ENCODE measurements at regions of chr6 and their contacts with region 1.

Region 1: GRCh38 chr6:103335412-103335811 is 1524.3 kb downstream of the HACE1 start:
- DNase-seq: no peak
- H3K4me3 ChIP-seq: no peak overlapping the region
- H3K27ac ChIP-seq: no peak overlapping the region
- H3K4me1 ChIP-seq: no peaks in the 10 kb centered on the region
- H3K27me3 ChIP-seq: no peaks in the 10 kb centered on the region
- CTCF ChIP-seq: no peak
- EP300 ChIP-seq: no peak
- POLR2A ChIP-seq: no peak

Region 2: DNA sequence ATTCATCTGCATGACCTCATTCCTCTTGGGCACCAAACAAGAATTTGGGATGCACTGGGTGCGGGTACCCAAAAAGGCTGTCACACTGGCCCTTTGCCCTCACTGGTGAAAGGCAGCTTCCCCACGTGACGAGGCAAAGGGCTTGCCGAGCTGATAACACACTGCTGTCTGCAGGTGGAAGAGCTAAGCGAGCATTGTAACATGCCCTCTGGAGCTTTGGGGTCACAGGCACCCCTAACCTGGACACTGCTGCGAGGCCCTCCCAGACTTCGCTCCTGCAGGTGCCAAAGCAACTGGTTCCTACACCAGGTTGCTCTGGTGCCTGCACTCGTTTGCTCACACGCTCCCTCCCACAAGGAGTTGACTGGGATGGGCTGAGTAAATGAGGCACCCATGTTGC is 71.4 kb before region 1 on chr6:
- in situ Hi-C with region 1: loop called in 1 of 4 experiments (anchors 10 kb)
- intact Hi-C with region 1: no loop called
- DNase-seq: no peak
- H3K4me3 ChIP-seq: no peak overlapping the region
- H3K27ac ChIP-seq: no peak overlapping the region
- H3K4me1 ChIP-seq: no peaks in the 10 kb centered on the region
- H3K27me3 ChIP-seq: no peaks in the 10 kb centered on the region
- CTCF ChIP-seq: no peak
- EP300 ChIP-seq: no peak
- POLR2A ChIP-seq: no peak

Region 3: DNA sequence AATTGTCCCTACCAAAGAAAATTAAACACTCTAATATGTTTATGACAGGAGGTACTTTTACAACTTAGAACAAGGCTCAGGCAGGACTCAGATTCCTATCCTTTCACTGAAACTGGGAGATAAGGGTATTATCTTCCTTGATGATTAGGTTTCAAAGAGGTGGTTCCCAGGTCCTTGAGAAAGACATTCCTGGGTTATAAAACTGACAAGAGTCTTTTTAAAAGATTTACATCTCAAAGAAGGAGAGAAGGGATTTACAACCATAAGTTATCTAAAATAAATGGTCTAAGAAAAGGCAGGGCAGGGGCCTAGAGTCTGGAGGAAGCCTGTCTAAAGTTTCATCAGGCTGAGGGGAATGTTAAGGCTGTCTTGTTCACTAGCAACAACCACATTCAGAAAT is 31.8 kb after region 1 on chr6:
- in situ Hi-C with region 1: no loop called
- intact Hi-C with region 1: no loop called
- DNase-seq: no peak
- H3K4me3 ChIP-seq: no peak overlapping the region
- H3K27ac ChIP-seq: no peak overlapping the region
- H3K4me1 ChIP-seq: no peaks in the 10 kb centered on the region
- H3K27me3 ChIP-seq: no peaks in the 10 kb centered on the region
- CTCF ChIP-seq: no peak
- EP300 ChIP-seq: no peak
- POLR2A ChIP-seq: no peak

Region 4: GRCh38 chr6:103723438-103724322 is 388.3 kb after region 1 on chr6:
- in situ Hi-C with region 1: no loop called
- intact Hi-C with region 1: no loop called
- DNase-seq: no peak
- H3K4me3 ChIP-seq: no peak overlapping the region
- H3K27ac ChIP-seq: no peak overlapping the region
- H3K4me1 ChIP-seq: no peaks in the 10 kb centered on the region
- H3K27me3 ChIP-seq: no peaks in the 10 kb centered on the region
- CTCF ChIP-seq: no peak
- EP300 ChIP-seq: no peak
- POLR2A ChIP-seq: no peak

Region 5: GRCh38 chr6:104064876-104065275 is 729.5 kb after region 1 on chr6:
- in situ Hi-C with region 1: no loop called
- intact Hi-C with region 1: no loop called
- DNase-seq: no peak
- H3K4me3 ChIP-seq: no peak overlapping the region
- H3K27ac ChIP-seq: no peak overlapping the region
- H3K4me1 ChIP-seq: no peaks in the 10 kb centered on the region
- H3K27me3 ChIP-seq: no peaks in the 10 kb centered on the region
- CTCF ChIP-seq: no peak
- EP300 ChIP-seq: no peak
- POLR2A ChIP-seq: no peak

Measured in transverse colon (tissue), 4 donors.